ENCODE measurements at regions of chr11 and their contacts with region 1.

Region 1: GRCh38 chr11:35617687-35618496 is at the start of gene FJX1:
- DNase-seq: peak in 4 of 9 donors; percentile 0 to 38 (median 7)
- ATAC-seq: no peak
- H3K4me3 ChIP-seq: no peak within 1 kb of the TSS
- H3K4me3 Mint-ChIP-seq: peak within 1 kb of the TSS; percentile 67 to 87 (median 82)
- H3K27ac ChIP-seq: no peak within 1 kb of the TSS
- H3K27ac Mint-ChIP-seq: no peak within 1 kb of the TSS
- H3K4me1 ChIP-seq: peaks cover 0 to 18% of the 10 kb centered on the region in 2 donors
- H3K4me1 Mint-ChIP-seq: peaks cover 0 to 18% (median 12%) of the 10 kb centered on the region in 7 donors
- H3K27me3 ChIP-seq: peaks cover 0 to 11% of the 10 kb centered on the region in 2 donors
- H3K27me3 Mint-ChIP-seq: peaks cover 60 to 78% (median 67%) of the 10 kb centered on the region in 5 donors
- total RNA-seq, gene FJX1: 0.15 TPM in 1 of 5 experiments, not detected in the others

Region 2: DNA sequence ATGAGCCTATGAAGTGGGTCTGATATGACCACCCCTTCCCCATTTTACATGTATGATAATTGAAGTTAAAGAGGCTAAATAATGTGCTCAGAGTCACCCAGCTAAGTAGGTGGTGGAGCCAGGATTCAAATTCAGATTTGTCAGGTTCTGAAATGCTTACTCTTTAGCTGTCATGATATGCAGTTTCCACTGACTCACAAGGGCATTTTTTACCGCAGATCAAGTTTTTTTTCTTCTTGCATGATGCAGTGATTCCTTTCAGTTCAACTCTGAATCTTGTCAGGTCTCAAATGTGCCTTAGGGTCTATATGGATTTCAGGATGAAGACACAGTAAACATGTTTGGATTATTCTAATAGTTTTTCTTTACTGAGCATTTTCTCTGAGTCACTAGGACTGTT is 32.1 kb after region 1 on chr11:
- CTCF ChIA-PET with region 1: no interaction called
- POLR2A ChIA-PET with region 1: no interaction called
- intact Hi-C with region 1: no loop called
- DNase-seq: no peak
- ATAC-seq: no peak
- H3K4me3 ChIP-seq: no peak overlapping the region
- H3K4me3 Mint-ChIP-seq: no peak overlapping the region
- H3K27ac ChIP-seq: no peak overlapping the region
- H3K27ac Mint-ChIP-seq: no peak overlapping the region
- H3K4me1 ChIP-seq: no peaks in the 10 kb centered on the region
- H3K4me1 Mint-ChIP-seq: peaks cover 0 to 3% (median 0%) of the 10 kb centered on the region in 7 donors
- H3K27me3 ChIP-seq: no peaks in the 10 kb centered on the region
- H3K27me3 Mint-ChIP-seq: peaks cover 28 to 58% (median 49%) of the 10 kb centered on the region in 5 donors

Region 3: GRCh38 chr11:35662649-35663407 is 44.9 kb after region 1 on chr11 and contains the start of gene TRIM44:
- CTCF ChIA-PET with region 1: no interaction called
- POLR2A ChIA-PET with region 1: no interaction called
- intact Hi-C with region 1: loop called (anchors 1 kb)
- DNase-seq: peak; percentile 69 to 85 (median 82)
- ATAC-seq: peak; percentile 89
- H3K4me3 ChIP-seq: peak within 1 kb of the TSS; percentile 94
- H3K4me3 Mint-ChIP-seq: peak within 1 kb of the TSS; percentile 91 to 99 (median 95)
- H3K27ac ChIP-seq: peak within 1 kb of the TSS; percentile 94
- H3K27ac Mint-ChIP-seq: peak within 1 kb of the TSS; percentile 90 to 100 (median 96)
- H3K4me1 ChIP-seq: peaks cover 21 to 22% of the 10 kb centered on the region in 2 donors
- H3K4me1 Mint-ChIP-seq: peaks cover 24 to 61% (median 55%) of the 10 kb centered on the region in 7 donors
- H3K27me3 ChIP-seq: no peaks in the 10 kb centered on the region
- H3K27me3 Mint-ChIP-seq: peaks cover 0 to 22% (median 5%) of the 10 kb centered on the region in 5 donors
- total RNA-seq, gene TRIM44: 35.7 to 60.8 (median 58.6) TPM

Region 4: DNA sequence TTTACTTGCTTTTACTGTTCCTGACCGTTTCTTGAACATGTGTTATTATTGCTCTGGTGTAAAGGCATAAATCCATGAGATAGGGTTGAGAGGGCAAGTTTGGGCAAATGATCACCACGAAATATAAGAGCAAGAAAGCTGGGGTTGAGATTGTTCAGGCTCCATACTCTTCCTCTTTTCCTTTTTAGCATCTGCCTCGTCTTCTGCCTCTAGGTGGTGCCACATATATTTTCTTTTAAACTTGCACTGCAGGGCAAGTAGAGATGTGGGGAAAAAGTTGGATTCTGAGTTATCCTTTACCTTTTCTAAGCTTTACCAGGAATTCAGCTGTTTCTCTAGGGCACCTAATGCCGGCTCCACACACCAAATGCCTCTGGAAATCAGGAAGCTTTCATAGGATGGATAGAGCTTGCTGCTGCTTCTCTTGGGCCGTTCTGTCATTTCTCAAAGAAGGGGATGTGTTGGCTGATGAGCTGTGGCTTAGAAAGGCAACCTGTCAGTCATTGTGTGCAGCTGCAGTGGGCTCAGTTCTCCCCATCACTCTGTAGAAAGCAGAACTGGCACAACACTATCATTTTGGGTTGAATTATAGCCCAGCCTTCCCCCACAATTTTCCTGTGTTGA is 424.2 kb after region 1 on chr11:
- CTCF ChIA-PET with region 1: no interaction called
- POLR2A ChIA-PET with region 1: no interaction called
- intact Hi-C with region 1: loop called in 1 of 2 experiments (anchors 5 kb)
- DNase-seq: no peak
- ATAC-seq: no peak
- H3K4me3 ChIP-seq: no peak overlapping the region
- H3K4me3 Mint-ChIP-seq: no peak overlapping the region
- H3K27ac ChIP-seq: no peak overlapping the region
- H3K27ac Mint-ChIP-seq: no peak overlapping the region
- H3K4me1 ChIP-seq: no peaks in the 10 kb centered on the region
- H3K4me1 Mint-ChIP-seq: no peaks in the 10 kb centered on the region
- H3K27me3 ChIP-seq: no peaks in the 10 kb centered on the region
- H3K27me3 Mint-ChIP-seq: peaks cover 0 to 11% (median 9%) of the 10 kb centered on the region in 5 donors

Region 5: GRCh38 chr11:36149538-36150242 is 531.8 kb after region 1 on chr11:
- CTCF ChIA-PET with region 1: no interaction called
- POLR2A ChIA-PET with region 1: no interaction called
- intact Hi-C with region 1: loop called (anchors 1 kb)
- DNase-seq: peak in 2 of 9 donors; percentile 9 to 47
- ATAC-seq: peak; percentile 88
- H3K4me3 ChIP-seq: no peak overlapping the region
- H3K4me3 Mint-ChIP-seq: no peak overlapping the region
- H3K27ac ChIP-seq: no peak overlapping the region
- H3K27ac Mint-ChIP-seq: no peak overlapping the region
- H3K4me1 ChIP-seq: no peaks in the 10 kb centered on the region
- H3K4me1 Mint-ChIP-seq: peaks cover 0 to 9% (median 0%) of the 10 kb centered on the region in 7 donors
- H3K27me3 ChIP-seq: no peaks in the 10 kb centered on the region
- H3K27me3 Mint-ChIP-seq: peaks cover 7 to 18% (median 10%) of the 10 kb centered on the region in 5 donors

Region 6: GRCh38 chr11:36478700-36479329 is 860.9 kb after region 1 on chr11:
- CTCF ChIA-PET with region 1: no interaction called
- POLR2A ChIA-PET with region 1: no interaction called
- intact Hi-C with region 1: loop called in 1 of 2 experiments (anchors 1 kb)
- DNase-seq: peak in 3 of 9 donors; percentile 6 to 27 (median 12)
- ATAC-seq: peak; percentile 47
- H3K4me3 ChIP-seq: no peak overlapping the region
- H3K4me3 Mint-ChIP-seq: no peak overlapping the region
- H3K27ac ChIP-seq: no peak overlapping the region
- H3K27ac Mint-ChIP-seq: no peak overlapping the region
- H3K4me1 ChIP-seq: no peaks in the 10 kb centered on the region
- H3K4me1 Mint-ChIP-seq: peaks cover 0 to 6% (median 0%) of the 10 kb centered on the region in 7 donors
- H3K27me3 ChIP-seq: no peaks in the 10 kb centered on the region
- H3K27me3 Mint-ChIP-seq: no peaks in the 10 kb centered on the region

Region 7: GRCh38 chr11:36509694-36510566 is 892.0 kb after region 1 on chr11 and contains the start of gene TRAF6:
- CTCF ChIA-PET with region 1: no interaction called
- POLR2A ChIA-PET with region 1: no interaction called
- intact Hi-C with region 1: loop called in 1 of 2 experiments (anchors 1 kb)
- DNase-seq: peak; percentile 75 to 95 (median 87)
- ATAC-seq: peak; percentile 99
- H3K4me3 ChIP-seq: peak within 1 kb of the TSS; percentile 82
- H3K4me3 Mint-ChIP-seq: peak within 1 kb of the TSS; percentile 89 to 99 (median 97)
- H3K27ac ChIP-seq: peak within 1 kb of the TSS; percentile 84
- H3K27ac Mint-ChIP-seq: peak within 1 kb of the TSS; percentile 87 to 98 (median 94)
- H3K4me1 ChIP-seq: peaks cover 5 to 13% of the 10 kb centered on the region in 2 donors
- H3K4me1 Mint-ChIP-seq: peaks cover 21 to 42% (median 31%) of the 10 kb centered on the region in 7 donors
- H3K27me3 ChIP-seq: no peaks in the 10 kb centered on the region
- H3K27me3 Mint-ChIP-seq: peaks cover 3 to 23% (median 9%) of the 10 kb centered on the region in 5 donors
- total RNA-seq, gene TRAF6: 14.7 to 22.2 (median 20.6) TPM

Region 8: DNA sequence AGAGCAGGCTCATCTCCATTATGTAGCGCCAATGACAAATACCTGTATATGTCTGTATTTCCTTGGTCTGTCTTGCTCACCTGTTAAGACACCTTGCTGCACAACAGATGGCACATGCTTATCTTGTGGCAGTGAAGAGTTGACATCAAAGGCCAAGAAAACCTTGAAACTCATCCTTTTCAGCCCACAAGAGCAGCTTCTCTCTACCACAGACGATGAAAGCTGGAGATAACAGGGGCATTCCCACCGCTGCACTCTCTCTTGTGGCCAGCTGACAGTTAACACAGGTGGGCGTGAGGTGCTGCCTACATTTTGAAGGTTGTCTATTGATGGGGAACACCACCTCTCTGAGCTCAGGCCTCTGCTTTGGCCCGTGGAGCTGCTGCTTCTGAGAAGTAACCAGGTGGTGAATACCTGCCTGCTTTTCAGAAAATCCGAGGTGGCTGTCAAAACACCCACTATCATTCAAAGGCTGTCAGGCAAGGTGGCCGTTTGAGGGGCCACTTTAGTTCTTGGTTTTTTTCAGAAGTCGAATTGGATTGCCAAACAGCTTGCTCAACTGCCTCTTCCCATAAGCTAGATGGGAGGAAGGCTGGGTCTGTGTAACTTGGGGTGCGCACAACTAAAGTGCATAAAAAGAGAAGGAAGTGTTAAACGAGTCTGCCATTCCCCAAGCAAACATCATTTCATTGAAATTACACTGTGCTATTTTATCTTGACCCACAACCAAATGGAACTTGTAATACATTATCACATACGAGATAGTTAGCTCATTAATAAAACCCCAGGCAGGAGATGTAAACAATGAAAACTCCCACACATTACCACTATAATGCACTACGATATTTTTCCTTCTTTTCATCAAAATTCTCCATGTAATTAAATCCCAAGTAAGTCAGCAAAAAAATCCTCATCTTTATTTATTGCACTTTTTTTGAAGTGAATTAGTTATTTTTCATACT is 1067.2 kb after region 1 on chr11:
- CTCF ChIA-PET with region 1: no interaction called
- POLR2A ChIA-PET with region 1: no interaction called
- intact Hi-C with region 1: no loop called
- DNase-seq: peak in 8 of 9 donors; percentile 27 to 72 (median 42)
- ATAC-seq: peak; percentile 84
- H3K4me3 ChIP-seq: no peak overlapping the region
- H3K4me3 Mint-ChIP-seq: no peak overlapping the region
- H3K27ac ChIP-seq: no peak overlapping the region
- H3K27ac Mint-ChIP-seq: no peak overlapping the region
- H3K4me1 ChIP-seq: peaks cover 5 to 8% of the 10 kb centered on the region in 2 donors
- H3K4me1 Mint-ChIP-seq: peaks cover 0 to 17% (median 9%) of the 10 kb centered on the region in 7 donors
- H3K27me3 ChIP-seq: no peaks in the 10 kb centered on the region
- H3K27me3 Mint-ChIP-seq: peaks cover 41 to 72% (median 64%) of the 10 kb centered on the region in 5 donors

Measured in naive thymus-derived CD4-positive, alpha-beta T cell (primary cell).